Gastrocnemius medialis (tissue), 4 donors: ENCODE measurements at regions of chr15 and their contacts with region 1.

Region 1: DNA sequence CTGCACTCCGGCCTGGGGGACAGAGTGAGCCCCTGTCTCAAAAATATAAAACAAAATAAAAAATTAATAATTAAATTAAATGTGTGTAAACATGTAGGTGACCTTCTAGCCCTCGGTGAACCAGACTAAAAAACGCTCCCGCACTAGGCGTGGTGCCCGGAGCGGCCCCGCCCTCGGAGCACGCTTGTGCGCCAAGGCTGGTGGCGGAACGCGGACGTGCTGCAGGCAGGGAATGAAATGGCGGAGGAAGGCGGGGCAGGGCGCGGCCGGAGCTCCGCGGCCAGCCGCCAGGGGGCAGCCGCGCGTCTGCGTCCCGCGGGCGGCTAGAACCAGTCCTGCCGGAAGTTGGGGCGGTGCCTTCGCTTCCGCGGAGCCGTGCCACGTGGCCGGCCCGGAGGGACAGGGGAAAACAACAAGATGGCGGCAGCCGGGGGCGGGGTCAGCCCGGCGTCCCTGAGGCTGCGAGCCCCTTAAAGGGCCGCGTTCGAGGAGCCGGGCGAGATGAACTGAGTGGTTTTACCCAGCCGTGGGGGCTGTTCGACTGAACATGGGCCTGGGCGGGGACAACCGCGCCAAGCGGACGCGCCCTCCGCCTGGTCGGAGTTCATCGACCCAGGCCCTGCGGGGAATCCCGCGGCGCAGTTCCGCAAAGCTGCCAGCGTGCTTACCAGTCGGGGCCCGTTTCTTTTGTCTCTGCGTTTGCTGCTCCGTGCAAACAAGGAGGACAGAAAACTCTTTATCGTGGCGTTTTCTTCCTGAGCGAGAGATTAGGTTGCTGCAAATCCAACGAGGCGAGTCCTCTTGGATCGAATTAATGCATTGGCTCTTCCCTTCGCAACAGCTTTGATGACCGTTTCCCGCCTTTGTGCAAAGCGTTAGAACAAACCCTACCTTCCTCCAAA is 90.9 kb upstream of the CHD2 start:
- DNase-seq: peak; percentile 97 to 99
- ATAC-seq: peak; percentile 62 to 70
- H3K4me3 ChIP-seq: peak overlapping the region; percentile 61 to 84 (median 70)
- H3K27ac ChIP-seq: peak overlapping the region; percentile 97 to 99 (median 98)
- H3K4me1 ChIP-seq: peaks cover 37 to 45% of the 10 kb centered on the region in 2 donors
- H3K27me3 ChIP-seq: no peaks in the 10 kb centered on the region
- CTCF ChIP-seq: peak; percentile 79 to 100 (median 99)
- POLR2A ChIP-seq: peak; percentile 78 to 92

Region 2: GRCh38 chr15:92881802-92882696 is 72.8 kb after region 1 on chr15:
- in situ Hi-C with region 1: loop called in 1 of 4 experiments (anchors 5 kb)
- intact Hi-C with region 1: loop called (anchors 1 kb)
- DNase-seq: peak; percentile 99 to 100
- ATAC-seq: peak; percentile 92 to 94
- H3K4me3 ChIP-seq: peak overlapping the region; percentile 55 to 71 (median 66)
- H3K27ac ChIP-seq: peak overlapping the region; percentile 91 to 97 (median 92)
- H3K4me1 ChIP-seq: peaks cover 27 to 33% of the 10 kb centered on the region in 2 donors
- H3K27me3 ChIP-seq: no peaks in the 10 kb centered on the region
- CTCF ChIP-seq: no peak
- POLR2A ChIP-seq: peak in 1 of 2 donors; percentile 86

Region 3: DNA sequence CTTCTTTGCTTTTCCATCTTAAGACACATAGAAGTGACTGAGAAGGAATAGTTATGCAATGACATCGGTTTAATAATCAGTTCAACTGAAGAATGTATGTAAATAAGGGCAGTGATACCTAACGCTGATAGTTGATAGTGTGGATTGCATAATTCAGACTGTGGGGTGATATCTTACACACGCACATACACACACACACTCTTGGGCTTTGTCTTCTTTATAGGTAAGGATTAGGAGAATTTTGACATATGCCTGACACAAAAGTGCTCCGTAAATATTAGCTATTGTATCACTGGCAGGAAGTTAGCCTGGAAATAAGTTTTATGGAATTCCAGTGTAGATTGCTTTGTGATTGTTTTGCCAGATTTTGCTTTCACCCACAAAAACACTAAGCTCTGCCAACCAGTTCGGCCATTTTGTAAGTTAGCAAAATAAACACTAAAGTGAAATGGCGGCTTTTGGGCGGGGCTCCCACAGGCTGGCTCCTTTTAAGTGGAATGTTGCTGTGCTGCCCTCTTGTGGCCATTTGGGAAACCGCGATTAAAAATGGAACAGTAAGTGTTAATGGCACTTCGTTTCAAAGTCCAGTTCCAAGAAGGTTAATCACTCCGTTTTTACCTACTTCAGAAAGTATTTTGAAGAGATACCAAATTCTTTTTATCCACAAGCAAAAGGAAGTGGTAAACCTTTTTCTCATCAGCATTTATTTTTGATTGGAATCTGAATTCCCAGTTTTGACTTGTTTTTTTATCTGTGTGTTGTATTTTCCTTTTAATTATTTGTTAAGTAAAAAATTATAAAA is 108.6 kb after region 1 on chr15:
- in situ Hi-C with region 1: loop called (anchors 5 to 10 kb)
- intact Hi-C with region 1: loop called (anchors 1 kb)
- DNase-seq: peak; percentile 87 to 94
- ATAC-seq: peak; percentile 57 to 64
- H3K4me3 ChIP-seq: peak overlapping the region; percentile 3 to 21 (median 12)
- H3K27ac ChIP-seq: peak overlapping the region; percentile 91 to 97 (median 96)
- H3K4me1 ChIP-seq: peaks cover 86 to 91% of the 10 kb centered on the region in 2 donors
- H3K27me3 ChIP-seq: no peaks in the 10 kb centered on the region
- CTCF ChIP-seq: peak; percentile 88 to 98 (median 95)
- POLR2A ChIP-seq: no peak

Region 4: DNA sequence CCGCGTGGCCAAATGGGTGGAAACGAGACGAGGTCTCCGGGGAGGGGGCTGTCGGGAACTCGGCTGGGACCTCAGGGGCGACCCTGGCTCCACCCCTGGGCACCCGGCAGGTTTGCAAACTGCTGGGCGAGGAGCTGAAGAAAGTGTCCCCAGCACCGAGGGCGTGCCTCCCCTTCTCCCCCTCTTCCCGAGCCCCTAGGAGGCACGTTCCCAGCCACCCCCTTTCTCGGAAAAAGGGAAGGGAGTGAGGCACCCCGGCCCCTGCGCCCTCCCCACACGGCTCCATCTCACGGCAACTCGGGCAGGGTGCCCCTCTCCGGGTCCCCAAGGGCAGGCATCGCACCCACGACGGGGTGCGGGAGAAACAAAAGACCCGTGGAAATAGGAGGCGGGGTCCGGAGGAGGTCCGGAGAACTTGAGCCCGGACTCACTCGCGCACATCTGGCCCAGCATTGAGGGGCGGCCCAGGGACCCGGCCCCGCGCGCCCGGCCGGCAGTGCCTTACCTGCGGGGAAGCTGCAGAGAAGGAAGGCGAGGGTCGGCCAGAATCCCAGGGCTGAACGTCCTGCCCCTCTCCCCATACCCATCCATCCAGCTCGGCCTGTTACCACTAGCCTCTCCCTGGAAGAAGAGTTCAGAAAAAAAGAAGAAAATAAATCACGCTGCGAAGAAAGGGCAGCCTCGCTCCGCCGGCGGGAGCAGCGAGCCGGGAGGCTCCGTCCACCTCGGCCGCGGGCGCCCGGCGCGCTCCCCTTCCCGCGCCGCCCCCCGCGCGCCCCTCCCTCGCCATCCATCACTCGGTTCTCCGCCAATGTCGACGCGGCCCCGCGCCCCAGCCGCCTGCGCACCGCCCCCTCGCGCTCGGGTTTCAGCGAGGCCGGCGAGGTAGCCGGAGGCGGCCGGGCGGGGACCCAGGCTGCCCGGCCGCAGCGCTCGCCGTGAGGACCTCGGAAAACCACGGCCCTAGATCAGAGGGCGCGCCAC is 263.5 kb after region 1 on chr15:
- in situ Hi-C with region 1: loop called in 1 of 4 experiments (anchors 10 kb)
- intact Hi-C with region 1: loop called (anchors 2 kb)
- DNase-seq: peak; percentile 83 to 86
- ATAC-seq: peak; percentile 40 to 55
- H3K4me3 ChIP-seq: peak overlapping the region; percentile 64 to 93 (median 74)
- H3K27ac ChIP-seq: peak overlapping the region; percentile 94 to 98 (median 96)
- H3K4me1 ChIP-seq: peaks cover 78 to 88% of the 10 kb centered on the region in 2 donors
- H3K27me3 ChIP-seq: no peaks in the 10 kb centered on the region
- CTCF ChIP-seq: peak in 1 of 5 experiments; percentile 8
- POLR2A ChIP-seq: peak; percentile 95 to 97